GM12878 (cell line): ENCODE measurements at regions of chr7 and their contacts with region 1.

Region 1: GRCh38 chr7:92447345-92448204 is at the start of gene GATAD1:
- DNase-seq: no peak
- ATAC-seq: peak; percentile 91
- H3K4me3 ChIP-seq: peak within 1 kb of the TSS; percentile 92
- H3K27ac ChIP-seq: peak within 1 kb of the TSS; percentile 95
- H3K4me1 ChIP-seq: no peaks in the 10 kb centered on the region
- H3K27me3 ChIP-seq: no peaks in the 10 kb centered on the region
- CTCF ChIP-seq: peak; percentile 88 to 99 (median 91)
- EP300 ChIP-seq: no peak
- POLR2A ChIP-seq: peak; percentile 72
- RAD21 ChIP-seq: no peak
- polyA plus RNA-seq, gene GATAD1: 5.5 to 6.6 TPM

Region 2: GRCh38 chr7:91089382-91089963 is 1358.1 kb before region 1 on chr7:
- CTCF ChIA-PET with region 1: no interaction called
- POLR2A ChIA-PET with region 1: no interaction called
- RAD21 ChIA-PET with region 1: no interaction called
- SMC1A ChIA-PET with region 1: interaction called, 4 read pairs
- in situ Hi-C with region 1: loop called (anchors 25 kb)
- intact Hi-C with region 1: no loop called
- DNase-seq: no peak
- ATAC-seq: peak; percentile 82
- H3K4me3 ChIP-seq: no peak overlapping the region
- H3K27ac ChIP-seq: no peak overlapping the region
- H3K4me1 ChIP-seq: no peaks in the 10 kb centered on the region
- H3K27me3 ChIP-seq: no peaks in the 10 kb centered on the region
- CTCF ChIP-seq: peak; percentile 59 to 70 (median 67)
- EP300 ChIP-seq: no peak
- POLR2A ChIP-seq: no peak
- RAD21 ChIP-seq: peak; percentile 64

Region 3: DNA sequence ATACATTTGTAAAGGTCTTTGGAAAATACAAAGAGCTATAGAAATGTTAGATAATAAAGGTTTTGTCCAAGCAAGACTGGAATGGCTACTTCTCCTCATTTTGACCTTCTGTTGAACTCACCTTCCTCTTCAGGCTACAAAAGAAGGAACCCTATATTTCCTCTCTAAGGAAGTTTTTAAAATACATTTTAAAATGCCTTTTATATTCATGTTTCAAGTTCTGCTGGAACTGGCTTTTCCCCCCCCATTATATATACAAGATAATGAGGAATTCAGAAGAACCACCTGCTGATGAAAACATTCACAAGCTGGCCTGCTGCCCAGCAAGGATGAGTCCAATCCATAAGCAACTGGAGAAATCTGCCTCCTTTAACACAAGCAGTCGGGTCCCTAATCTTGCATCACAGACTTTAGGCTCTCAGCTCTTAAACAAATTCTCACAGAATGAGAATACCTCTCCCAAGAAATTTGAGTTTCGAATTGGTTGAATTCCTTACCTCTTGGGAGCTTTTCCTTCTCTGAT is 611.7 kb before region 1 on chr7:
- CTCF ChIA-PET with region 1: interaction called, 29 read pairs
- POLR2A ChIA-PET with region 1: no interaction called
- RAD21 ChIA-PET with region 1: interaction called, 18 read pairs
- SMC1A ChIA-PET with region 1: interaction called, 4 read pairs
- in situ Hi-C with region 1: loop called (anchors 5 kb)
- intact Hi-C with region 1: no loop called
- DNase-seq: no peak
- ATAC-seq: no peak
- H3K4me3 ChIP-seq: no peak overlapping the region
- H3K27ac ChIP-seq: no peak overlapping the region
- H3K4me1 ChIP-seq: no peaks in the 10 kb centered on the region
- H3K27me3 ChIP-seq: no peaks in the 10 kb centered on the region
- CTCF ChIP-seq: no peak
- EP300 ChIP-seq: no peak
- POLR2A ChIP-seq: no peak
- RAD21 ChIP-seq: no peak

Region 4: GRCh38 chr7:91940572-91941341 is 506.8 kb before region 1 on chr7 and contains the start of gene AKAP9:
- CTCF ChIA-PET with region 1: interaction called, 9 read pairs
- POLR2A ChIA-PET with region 1: interaction called, 3 read pairs
- RAD21 ChIA-PET with region 1: interaction called, 16 read pairs
- SMC1A ChIA-PET with region 1: interaction called, 3 read pairs
- in situ Hi-C with region 1: no loop called
- intact Hi-C with region 1: loop called (anchors 10 kb)
- DNase-seq: peak; percentile 44
- ATAC-seq: peak; percentile 96
- H3K4me3 ChIP-seq: peak within 1 kb of the TSS; percentile 98
- H3K27ac ChIP-seq: peak within 1 kb of the TSS; percentile 84
- H3K4me1 ChIP-seq: peaks cover 5% of the 10 kb centered on the region; the same call in 1 of the 2 replicates
- H3K27me3 ChIP-seq: no peaks in the 10 kb centered on the region
- CTCF ChIP-seq: no peak
- EP300 ChIP-seq: no peak
- POLR2A ChIP-seq: peak; percentile 88; the same call in 1 of the 2 replicates
- RAD21 ChIP-seq: no peak
- polyA plus RNA-seq, gene AKAP9: 21.1 to 42.8 TPM

Region 5: DNA sequence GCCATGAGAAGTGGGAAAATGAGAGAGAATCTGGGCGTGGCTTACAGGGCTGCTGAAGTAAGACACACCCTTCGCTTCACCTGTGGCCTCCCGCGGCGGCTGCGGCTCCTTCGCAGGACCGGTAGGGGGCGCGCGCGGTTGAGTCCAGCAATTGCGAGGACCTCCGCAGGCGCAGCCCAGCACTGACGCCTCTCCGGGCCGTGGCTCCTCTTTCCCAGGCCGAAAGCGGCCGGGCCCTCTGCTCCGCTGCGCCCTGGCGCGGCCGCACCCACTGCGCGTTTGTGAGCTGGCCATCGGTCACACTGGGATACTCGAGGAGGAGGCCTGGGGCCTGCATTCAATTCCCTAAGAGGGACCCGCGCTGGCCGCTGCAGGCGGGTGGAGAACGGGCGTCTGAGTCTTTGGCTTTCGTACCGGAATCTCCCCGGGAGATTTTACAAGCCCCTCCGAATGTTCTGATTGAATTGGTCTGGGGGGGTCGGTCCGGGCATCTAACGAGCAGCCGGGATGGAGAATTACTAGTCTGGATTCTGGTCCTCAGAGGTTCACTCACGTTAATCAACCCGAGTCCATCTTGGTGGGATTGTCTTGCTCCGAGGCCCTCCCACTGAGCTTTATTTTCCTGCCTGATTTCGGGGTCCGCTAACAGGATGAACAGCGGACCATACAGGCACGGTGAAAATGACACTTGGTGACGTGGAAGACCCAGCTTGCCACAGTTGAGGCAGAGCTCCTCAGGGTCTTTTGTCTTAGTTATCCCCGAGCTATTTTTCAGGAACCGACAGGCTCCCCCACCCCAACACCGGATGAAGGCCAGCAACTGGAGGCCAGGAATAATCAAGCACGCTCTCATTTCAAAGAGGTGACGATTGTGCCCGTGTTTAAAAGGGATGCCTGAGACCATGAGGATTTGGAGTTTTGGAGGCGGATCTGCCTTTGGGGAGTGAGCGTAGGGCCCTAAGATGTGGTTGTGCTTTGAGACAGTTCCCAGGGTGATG is 268.3 kb before region 1 on chr7 and contains the start of gene LRRD1:
- CTCF ChIA-PET with region 1: interaction called, 14 read pairs
- POLR2A ChIA-PET with region 1: no interaction called
- RAD21 ChIA-PET with region 1: interaction called, 5 read pairs
- SMC1A ChIA-PET with region 1: interaction called, 12 read pairs
- in situ Hi-C with region 1: no loop called
- intact Hi-C with region 1: loop called (anchors 2 kb)
- DNase-seq: peak; percentile 33
- ATAC-seq: peak; percentile 100
- H3K4me3 ChIP-seq: peak within 1 kb of the TSS; percentile 63
- H3K27ac ChIP-seq: no peak within 1 kb of the TSS
- H3K4me1 ChIP-seq: no peaks in the 10 kb centered on the region; the same call in 1 of the 2 replicates
- H3K27me3 ChIP-seq: no peaks in the 10 kb centered on the region
- CTCF ChIP-seq: peak; percentile 96 to 97 (median 97)
- EP300 ChIP-seq: no peak
- POLR2A ChIP-seq: peak; percentile 47; the same call in 1 of the 2 replicates
- RAD21 ChIP-seq: peak; percentile 54
- polyA plus RNA-seq, gene LRRD1: not detected

Region 6: DNA sequence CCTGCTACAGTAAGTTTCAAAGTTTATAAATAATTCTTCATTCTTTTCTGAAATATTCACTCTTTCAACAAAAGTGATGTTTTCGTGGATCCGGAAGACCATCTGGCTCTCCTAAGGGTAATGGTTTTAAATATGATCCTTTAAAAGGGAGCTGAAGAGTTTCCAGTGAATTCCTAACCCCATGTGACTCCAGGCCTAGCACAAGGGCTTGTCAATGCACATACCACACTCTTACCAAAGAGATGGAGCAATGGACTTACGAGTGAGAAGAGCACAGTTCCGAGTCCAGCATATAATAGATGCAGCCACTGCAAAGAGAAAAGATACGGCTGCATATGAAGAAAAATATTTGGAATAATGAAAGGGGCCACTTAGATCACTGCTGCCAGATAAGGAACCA is 32.4 kb before region 1 on chr7:
- CTCF ChIA-PET with region 1: interaction called, 12 read pairs
- POLR2A ChIA-PET with region 1: no interaction called
- RAD21 ChIA-PET with region 1: interaction called, 3 read pairs
- SMC1A ChIA-PET with region 1: no interaction called
- in situ Hi-C with region 1: no loop called
- intact Hi-C with region 1: no loop called
- DNase-seq: no peak
- ATAC-seq: no peak
- H3K4me3 ChIP-seq: no peak overlapping the region
- H3K27ac ChIP-seq: no peak overlapping the region
- H3K4me1 ChIP-seq: no peaks in the 10 kb centered on the region
- H3K27me3 ChIP-seq: no peaks in the 10 kb centered on the region
- CTCF ChIP-seq: no peak
- EP300 ChIP-seq: no peak
- POLR2A ChIP-seq: no peak
- RAD21 ChIP-seq: no peak

Region 7: DNA sequence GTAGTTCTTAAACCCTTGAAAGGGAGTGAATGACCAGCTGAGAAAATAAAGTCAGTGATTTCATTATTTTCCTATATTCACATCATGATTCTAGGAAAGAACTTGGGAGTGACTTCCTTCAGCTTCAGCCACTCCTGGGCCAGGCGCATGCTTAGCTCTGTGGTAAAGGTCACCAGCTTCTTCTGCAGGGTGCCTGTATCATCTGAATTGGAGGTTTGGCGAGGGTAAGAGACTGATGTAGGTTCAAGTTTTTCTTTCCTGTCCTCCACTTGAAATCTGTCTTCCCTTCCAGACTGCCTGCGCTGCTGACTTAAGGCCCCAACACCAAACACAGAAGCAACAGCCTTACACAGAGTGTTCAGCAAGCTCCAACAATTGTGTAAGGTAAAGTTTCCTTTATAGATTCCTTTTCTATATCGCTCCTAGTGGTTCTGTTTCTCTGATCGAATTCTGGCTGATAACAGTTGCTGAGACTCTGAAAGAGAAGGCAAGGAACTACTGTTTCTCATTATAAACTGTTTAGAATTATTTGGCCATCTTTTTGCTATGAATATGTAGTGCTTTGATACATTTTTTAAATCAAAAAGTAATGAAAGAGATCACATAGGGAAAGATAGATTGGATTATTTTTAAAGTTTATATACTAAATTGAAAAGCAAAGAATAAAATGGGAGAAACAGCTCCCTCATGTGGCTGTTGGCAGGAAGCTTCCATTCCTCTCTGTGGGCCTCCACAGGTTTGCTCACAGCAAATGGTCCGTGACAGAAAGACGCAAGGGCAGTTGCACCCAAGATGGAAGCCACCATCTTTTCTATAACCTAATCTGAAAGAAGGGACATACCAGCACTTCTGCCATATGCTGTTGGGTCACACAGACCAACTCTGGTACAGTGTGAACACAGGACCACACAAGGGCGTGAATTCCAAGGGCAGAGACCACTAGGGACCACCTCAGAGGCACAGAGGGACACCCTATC is 13.7 kb after region 1 on chr7:
- CTCF ChIA-PET with region 1: interaction called, 37 read pairs
- POLR2A ChIA-PET with region 1: interaction called, 4 read pairs
- RAD21 ChIA-PET with region 1: interaction called, 8 read pairs
- SMC1A ChIA-PET with region 1: interaction called, 3 read pairs
- in situ Hi-C with region 1: no loop called
- intact Hi-C with region 1: no loop called
- DNase-seq: no peak
- ATAC-seq: peak; percentile 99
- H3K4me3 ChIP-seq: no peak overlapping the region
- H3K27ac ChIP-seq: no peak overlapping the region
- H3K4me1 ChIP-seq: no peaks in the 10 kb centered on the region
- H3K27me3 ChIP-seq: no peaks in the 10 kb centered on the region
- CTCF ChIP-seq: peak; percentile 67 to 78 (median 69)
- EP300 ChIP-seq: no peak
- POLR2A ChIP-seq: no peak
- RAD21 ChIP-seq: peak; percentile 49

Region 8: GRCh38 chr7:92504563-92504962 is 57.0 kb after region 1 on chr7:
- CTCF ChIA-PET with region 1: no interaction called
- POLR2A ChIA-PET with region 1: no interaction called
- RAD21 ChIA-PET with region 1: no interaction called
- SMC1A ChIA-PET with region 1: no interaction called
- in situ Hi-C with region 1: no loop called
- intact Hi-C with region 1: no loop called
- DNase-seq: no peak
- ATAC-seq: no peak
- H3K4me3 ChIP-seq: no peak overlapping the region
- H3K27ac ChIP-seq: no peak overlapping the region
- H3K4me1 ChIP-seq: no peaks in the 10 kb centered on the region
- H3K27me3 ChIP-seq: no peaks in the 10 kb centered on the region
- CTCF ChIP-seq: no peak
- EP300 ChIP-seq: no peak
- POLR2A ChIP-seq: no peak
- RAD21 ChIP-seq: no peak